ENCODE measurements at regions of chr1 and their contacts with region 1.

Region 1: GRCh38 chr1:37486680-37487618 is 12.6 kb downstream of the ZC3H12A start:
- DNase-seq: peak; percentile 84
- ATAC-seq: peak; percentile 80
- H3K4me3 Mint-ChIP-seq: no peak overlapping the region
- H3K27ac Mint-ChIP-seq: no peak overlapping the region; the same call in 1 of the 2 replicates
- H3K4me1 Mint-ChIP-seq: peaks cover 13% of the 10 kb centered on the region
- H3K27me3 Mint-ChIP-seq: no peaks in the 10 kb centered on the region
- CTCF ChIP-seq: peak; percentile 95

Region 2: GRCh38 chr1:37391211-37392011 is 95.5 kb before region 1 on chr1:
- CTCF ChIA-PET with region 1: interaction called, 13 read pairs
- POLR2A ChIA-PET with region 1: no interaction called
- DNase-seq: peak; percentile 46
- ATAC-seq: peak; percentile 32
- H3K4me3 Mint-ChIP-seq: no peak overlapping the region
- H3K27ac Mint-ChIP-seq: no peak overlapping the region
- H3K4me1 Mint-ChIP-seq: peaks cover 31% of the 10 kb centered on the region
- H3K27me3 Mint-ChIP-seq: no peaks in the 10 kb centered on the region
- CTCF ChIP-seq: no peak

Region 3: GRCh38 chr1:37449936-37450335 is 37.0 kb before region 1 on chr1:
- CTCF ChIA-PET with region 1: interaction called, 279 read pairs
- POLR2A ChIA-PET with region 1: no interaction called
- DNase-seq: no peak
- ATAC-seq: no peak
- H3K4me3 Mint-ChIP-seq: no peak overlapping the region
- H3K27ac Mint-ChIP-seq: no peak overlapping the region
- H3K4me1 Mint-ChIP-seq: peaks cover 61% of the 10 kb centered on the region
- H3K27me3 Mint-ChIP-seq: peaks cover 5% of the 10 kb centered on the region
- CTCF ChIP-seq: no peak

Region 4: GRCh38 chr1:37474046-37474759 is 12.7 kb before region 1 on chr1 and contains the start of gene ZC3H12A:
- CTCF ChIA-PET with region 1: interaction called, 109 read pairs
- POLR2A ChIA-PET with region 1: interaction called, 13 read pairs
- DNase-seq: peak; percentile 83
- ATAC-seq: peak; percentile 67
- H3K4me3 Mint-ChIP-seq: peak within 1 kb of the TSS; percentile 73
- H3K27ac Mint-ChIP-seq: peak within 1 kb of the TSS; percentile 27; the same call in 1 of the 2 replicates
- H3K4me1 Mint-ChIP-seq: peaks cover 57% of the 10 kb centered on the region
- H3K27me3 Mint-ChIP-seq: peaks cover 23% of the 10 kb centered on the region
- CTCF ChIP-seq: no peak
- total RNA-seq, gene ZC3H12A: 8.4 to 10.9 TPM (median 9.6 TPM) in 3 replicates

Region 5: DNA sequence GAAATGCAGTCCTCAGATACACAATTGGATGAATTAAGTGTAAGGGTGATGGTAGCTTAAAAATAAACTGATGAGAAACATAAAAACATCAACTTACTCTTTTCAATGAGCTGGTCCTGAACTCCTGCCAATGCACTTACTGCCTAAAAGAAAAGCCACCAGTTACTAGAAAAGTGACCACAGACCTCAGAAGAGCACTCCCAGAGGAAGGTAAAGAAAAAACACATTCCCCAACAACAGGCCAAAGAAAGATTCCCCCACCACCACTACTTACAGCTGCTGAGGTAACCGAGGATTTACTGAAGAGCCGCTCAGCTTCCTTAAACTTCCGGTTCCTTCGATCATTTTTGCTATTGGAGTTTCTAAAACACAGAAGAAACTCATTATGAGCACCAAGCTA is 22.2 kb after region 1 on chr1:
- CTCF ChIA-PET with region 1: interaction called, 53 read pairs
- POLR2A ChIA-PET with region 1: interaction called, 7 read pairs
- DNase-seq: no peak
- ATAC-seq: peak; percentile 60
- H3K4me3 Mint-ChIP-seq: no peak overlapping the region
- H3K27ac Mint-ChIP-seq: no peak overlapping the region
- H3K4me1 Mint-ChIP-seq: peaks cover 5% of the 10 kb centered on the region
- H3K27me3 Mint-ChIP-seq: no peaks in the 10 kb centered on the region
- CTCF ChIP-seq: no peak

Region 6: GRCh38 chr1:37932759-37933158 is 445.8 kb after region 1 on chr1:
- CTCF ChIA-PET with region 1: no interaction called
- POLR2A ChIA-PET with region 1: no interaction called
- DNase-seq: no peak
- ATAC-seq: no peak
- H3K4me3 Mint-ChIP-seq: peak overlapping the region; percentile 94
- H3K27ac Mint-ChIP-seq: 0 out of 2 replicates have a peak overlapping the region, but pooled peaks have one; percentile 16
- H3K4me1 Mint-ChIP-seq: peaks cover 17% of the 10 kb centered on the region
- H3K27me3 Mint-ChIP-seq: no peaks in the 10 kb centered on the region
- CTCF ChIP-seq: no peak

Measured in WTC11 (cell line).